PC-3 (cell line): ENCODE measurements at regions of chr15 and their contacts with region 1.

Region 1: DNA sequence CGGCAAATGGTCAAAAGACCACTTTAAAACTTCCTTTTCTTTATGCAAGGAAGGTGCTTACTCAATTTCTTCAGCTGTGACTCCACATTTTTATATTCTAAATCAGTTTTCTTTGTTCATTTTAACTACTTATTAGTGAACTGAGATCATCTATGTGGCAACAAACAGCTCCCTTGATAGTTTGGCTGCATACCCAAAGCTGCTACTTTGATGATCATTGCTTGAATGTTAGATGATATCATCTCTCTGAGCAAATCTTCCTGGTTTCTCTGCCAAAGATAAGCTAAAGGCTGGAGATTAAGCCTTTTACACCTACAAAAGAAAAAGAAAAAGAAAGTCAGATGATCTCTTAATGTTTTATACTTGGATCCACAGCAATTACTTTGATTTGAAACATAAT is 95.5 kb downstream of the DPH6 start:
- DNase-seq: peak; percentile 29
- ATAC-seq: no peak
- H3K4me3 ChIP-seq: no peak overlapping the region
- H3K27ac ChIP-seq: no peak overlapping the region
- H3K4me1 ChIP-seq: peaks cover 23% of the 10 kb centered on the region
- H3K27me3 ChIP-seq: no peaks in the 10 kb centered on the region
- CTCF ChIP-seq: no peak

Region 2: DNA sequence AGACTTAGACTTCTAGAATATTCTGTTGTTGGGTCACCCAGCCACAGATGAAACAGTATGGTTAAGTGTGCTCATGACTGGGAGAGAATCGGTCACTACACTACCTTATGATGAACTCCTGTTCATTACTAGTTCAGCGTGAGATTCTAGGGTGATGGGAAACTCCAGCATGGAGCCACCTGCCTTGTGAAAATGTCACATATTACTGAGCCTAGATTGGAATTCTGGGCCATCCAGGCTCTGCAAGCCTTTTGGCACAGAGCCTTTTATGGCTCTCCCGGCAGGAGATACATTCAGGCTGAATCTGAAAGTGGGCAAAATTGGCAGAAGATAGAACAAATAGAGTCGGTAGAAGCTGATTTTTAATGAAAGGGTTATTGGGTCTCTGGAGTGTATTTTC is 384.4 kb before region 1 on chr15:
- CTCF ChIA-PET with region 1: interaction called, 11 read pairs
- POLR2A ChIA-PET with region 1: no interaction called
- intact Hi-C with region 1: no loop called
- DNase-seq: no peak
- ATAC-seq: no peak
- H3K4me3 ChIP-seq: no peak overlapping the region
- H3K27ac ChIP-seq: no peak overlapping the region
- H3K4me1 ChIP-seq: peaks cover 11% of the 10 kb centered on the region
- H3K27me3 ChIP-seq: no peaks in the 10 kb centered on the region
- CTCF ChIP-seq: no peak

Region 3: GRCh38 chr15:35243758-35244157 is 206.7 kb before region 1 on chr15:
- CTCF ChIA-PET with region 1: no interaction called
- POLR2A ChIA-PET with region 1: no interaction called
- intact Hi-C with region 1: no loop called
- DNase-seq: peak; percentile 54
- ATAC-seq: peak; percentile 92
- H3K4me3 ChIP-seq: no peak overlapping the region
- H3K27ac ChIP-seq: peak overlapping the region; percentile 10
- H3K4me1 ChIP-seq: peaks cover 11% of the 10 kb centered on the region
- H3K27me3 ChIP-seq: no peaks in the 10 kb centered on the region
- CTCF ChIP-seq: no peak

Region 4: GRCh38 chr15:35399901-35400300 is 50.6 kb before region 1 on chr15:
- CTCF ChIA-PET with region 1: no interaction called
- POLR2A ChIA-PET with region 1: no interaction called
- intact Hi-C with region 1: no loop called
- DNase-seq: no peak
- ATAC-seq: no peak
- H3K4me3 ChIP-seq: no peak overlapping the region
- H3K27ac ChIP-seq: no peak overlapping the region
- H3K4me1 ChIP-seq: no peaks in the 10 kb centered on the region
- H3K27me3 ChIP-seq: no peaks in the 10 kb centered on the region
- CTCF ChIP-seq: no peak

Region 5: DNA sequence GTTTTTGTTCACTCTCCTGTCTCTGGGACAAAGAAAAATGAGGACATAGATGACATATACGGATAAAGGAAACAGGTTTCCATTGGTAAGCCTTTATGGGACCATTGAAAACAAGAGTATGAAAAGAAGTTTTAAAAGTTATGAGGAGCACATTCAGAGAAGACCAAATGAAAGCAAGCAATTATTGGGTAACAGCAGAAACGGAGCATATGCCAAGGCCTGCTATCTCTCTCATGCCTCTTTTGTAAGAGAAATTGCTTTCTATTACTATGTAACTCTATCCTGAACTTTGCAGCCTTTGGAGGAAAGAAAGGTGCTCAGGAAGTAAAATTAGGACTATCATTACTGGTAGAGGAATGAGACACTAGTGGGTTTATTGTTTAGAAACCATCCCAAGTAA is 110.4 kb after region 1 on chr15:
- CTCF ChIA-PET with region 1: no interaction called
- POLR2A ChIA-PET with region 1: no interaction called
- intact Hi-C with region 1: no loop called
- DNase-seq: no peak
- ATAC-seq: no peak
- H3K4me3 ChIP-seq: no peak overlapping the region
- H3K27ac ChIP-seq: no peak overlapping the region
- H3K4me1 ChIP-seq: peaks cover 11% of the 10 kb centered on the region
- H3K27me3 ChIP-seq: no peaks in the 10 kb centered on the region
- CTCF ChIP-seq: no peak

Region 6: DNA sequence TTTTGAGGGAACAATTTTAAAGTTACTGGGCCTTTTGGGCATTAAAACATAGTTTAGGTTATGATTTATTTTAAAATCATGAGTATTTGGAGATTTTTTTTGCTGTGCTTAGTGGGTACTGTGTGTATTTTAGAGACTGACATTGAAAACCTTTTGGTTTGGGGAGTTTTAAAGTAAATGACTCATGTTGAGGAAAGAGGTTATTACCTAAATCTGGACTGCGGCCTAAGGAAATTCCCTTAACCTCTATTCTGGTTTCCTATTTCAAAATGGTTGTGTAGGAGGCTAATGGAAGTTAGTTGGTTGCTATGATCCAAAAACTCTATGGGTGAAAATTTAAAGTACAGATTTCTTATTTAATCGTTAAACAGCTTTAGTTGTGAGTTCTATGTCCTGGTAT is 152.8 kb after region 1 on chr15:
- CTCF ChIA-PET with region 1: no interaction called
- POLR2A ChIA-PET with region 1: no interaction called
- intact Hi-C with region 1: loop called (anchors 10 kb)
- DNase-seq: peak; percentile 65
- ATAC-seq: peak; percentile 86
- H3K4me3 ChIP-seq: no peak overlapping the region
- H3K27ac ChIP-seq: peak overlapping the region; percentile 35
- H3K4me1 ChIP-seq: peaks cover 13% of the 10 kb centered on the region
- H3K27me3 ChIP-seq: no peaks in the 10 kb centered on the region
- CTCF ChIP-seq: no peak